ENCODE measurements at regions of chr21 and their contacts with region 1.

Region 1: DNA sequence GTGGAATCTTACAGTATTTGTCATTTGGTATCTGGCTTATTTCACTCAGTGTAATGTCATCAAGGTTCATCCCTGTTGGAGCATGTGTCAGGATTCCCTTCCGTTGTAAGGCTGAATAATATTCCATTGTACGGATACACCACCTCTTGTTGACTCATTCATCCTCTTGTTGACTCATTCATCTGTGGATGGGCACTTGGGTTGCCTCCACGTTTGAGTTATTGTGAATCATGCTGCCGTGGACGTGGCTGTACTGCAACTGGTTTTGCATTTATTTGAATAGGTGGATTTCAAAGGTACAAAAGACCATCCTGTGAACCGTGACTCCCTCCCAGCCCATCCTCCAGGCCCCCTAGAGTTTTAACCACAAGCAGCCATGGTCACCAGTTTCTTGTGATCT is 11.9 kb upstream of the TCP10L start:
- DNase-seq: no peak
- H3K4me3 Mint-ChIP-seq: no peak overlapping the region
- H3K27ac Mint-ChIP-seq: peak overlapping the region; percentile 50
- H3K4me1 Mint-ChIP-seq: peaks cover 12% of the 10 kb centered on the region
- H3K27me3 Mint-ChIP-seq: no peaks in the 10 kb centered on the region

Region 2: GRCh38 chr21:32403201-32403777 is 193.9 kb before region 1 on chr21:
- CTCF ChIA-PET with region 1: interaction called, 10 read pairs
- POLR2A ChIA-PET with region 1: interaction called, 3 read pairs
- DNase-seq: peak; percentile 76
- H3K4me3 Mint-ChIP-seq: no peak overlapping the region
- H3K27ac Mint-ChIP-seq: no peak overlapping the region
- H3K4me1 Mint-ChIP-seq: peaks cover 15% of the 10 kb centered on the region
- H3K27me3 Mint-ChIP-seq: peaks cover 10% of the 10 kb centered on the region

Region 3: GRCh38 chr21:32494934-32495703 is 102.1 kb before region 1 on chr21:
- CTCF ChIA-PET with region 1: interaction called, 4 read pairs
- POLR2A ChIA-PET with region 1: interaction called, 12 read pairs
- DNase-seq: no peak
- H3K4me3 Mint-ChIP-seq: no peak overlapping the region
- H3K27ac Mint-ChIP-seq: no peak overlapping the region
- H3K4me1 Mint-ChIP-seq: peaks cover 16% of the 10 kb centered on the region
- H3K27me3 Mint-ChIP-seq: no peaks in the 10 kb centered on the region

Region 4: GRCh38 chr21:32612075-32612998 is 15.1 kb after region 1 on chr21 and contains the start of gene CFAP298:
- CTCF ChIA-PET with region 1: interaction called, 16 read pairs
- POLR2A ChIA-PET with region 1: no interaction called
- DNase-seq: peak; percentile 93
- H3K4me3 Mint-ChIP-seq: peak within 1 kb of the TSS; percentile 99
- H3K27ac Mint-ChIP-seq: peak within 1 kb of the TSS; percentile 91
- H3K4me1 Mint-ChIP-seq: peaks cover 26% of the 10 kb centered on the region
- H3K27me3 Mint-ChIP-seq: peaks cover 5% of the 10 kb centered on the region
- total RNA-seq, gene CFAP298: 32.6 to 40.2 TPM

Measured in activated CD4-positive, alpha-beta T cell treated with anti-CD3 and anti-CD28 coated beads, Interleukin-2, amount 10 ng/mL, durations not matched to agents 7 days and 5 days (primary cell).